ENCODE measurements at regions of chr12 and their contacts with region 1.

Region 1: GRCh38 chr12:12384571-12385340 is 27.9 kb downstream of the BORCS5 start:
- DNase-seq: no peak
- H3K4me3 ChIP-seq: no peak overlapping the region
- H3K27ac ChIP-seq: no peak overlapping the region
- H3K4me1 ChIP-seq: no peaks in the 10 kb centered on the region
- H3K27me3 ChIP-seq: no peaks in the 10 kb centered on the region
- CTCF ChIP-seq: no peak
- POLR2A ChIP-seq: no peak

Region 2: GRCh38 chr12:12138203-12139154 is 246.3 kb before region 1 on chr12:
- intact Hi-C with region 1: no loop called
- DNase-seq: no peak
- H3K4me3 ChIP-seq: no peak overlapping the region
- H3K27ac ChIP-seq: no peak overlapping the region
- H3K4me1 ChIP-seq: no peaks in the 10 kb centered on the region
- H3K27me3 ChIP-seq: no peaks in the 10 kb centered on the region
- CTCF ChIP-seq: no peak
- POLR2A ChIP-seq: no peak

Region 3: GRCh38 chr12:12442548-12443071 is 57.9 kb after region 1 on chr12:
- intact Hi-C with region 1: no loop called
- DNase-seq: no peak
- H3K4me3 ChIP-seq: no peak overlapping the region
- H3K27ac ChIP-seq: peak overlapping the region; percentile 23 to 73
- H3K4me1 ChIP-seq: peaks cover 16% of the 10 kb centered on the region
- H3K27me3 ChIP-seq: no peaks in the 10 kb centered on the region
- CTCF ChIP-seq: no peak
- POLR2A ChIP-seq: no peak

Region 4: DNA sequence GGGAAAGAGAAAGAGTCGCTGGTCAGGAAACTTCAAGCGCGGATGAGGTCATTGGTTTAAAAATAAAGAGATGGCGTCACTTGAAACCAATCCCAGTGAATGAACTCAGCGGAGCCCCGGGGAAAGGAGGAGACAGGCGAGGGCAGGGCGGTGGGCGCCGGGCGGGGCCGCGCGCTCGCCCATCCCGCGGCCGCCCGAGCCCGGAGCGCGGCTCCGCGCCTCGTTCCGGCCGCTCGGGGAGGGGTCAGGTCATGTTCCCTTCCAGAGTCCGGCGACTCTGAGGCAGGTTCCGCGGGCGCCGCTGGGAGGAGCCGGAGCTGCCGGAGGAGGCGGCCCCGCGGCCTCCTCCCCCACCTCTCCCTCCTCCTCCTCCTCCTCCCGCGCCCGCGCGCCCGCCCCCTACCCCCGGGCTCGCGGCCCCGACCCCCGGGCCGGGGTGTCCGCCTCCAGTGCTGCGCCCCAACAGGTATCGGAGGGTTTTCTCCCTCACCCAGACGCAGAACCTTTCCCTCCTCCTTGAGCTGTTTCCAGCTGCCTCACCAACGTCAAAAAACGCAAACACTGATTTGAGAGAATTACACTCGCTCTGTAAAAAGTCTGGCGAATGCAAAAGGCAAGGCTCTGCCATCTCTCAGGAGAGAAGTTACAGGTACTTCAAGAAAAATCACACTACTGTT is 178.0 kb after region 1 on chr12 and contains the start of gene DUSP16:
- intact Hi-C with region 1: loop called (anchors 10 kb)
- DNase-seq: peak; percentile 94
- H3K4me3 ChIP-seq: peak within 1 kb of the TSS; percentile 91 to 96
- H3K27ac ChIP-seq: peak within 1 kb of the TSS; percentile 100
- H3K4me1 ChIP-seq: peaks cover 18% of the 10 kb centered on the region
- H3K27me3 ChIP-seq: no peaks in the 10 kb centered on the region
- CTCF ChIP-seq: peak in 1 of 3 experiments; percentile 40
- POLR2A ChIP-seq: no peak
- total RNA-seq, gene DUSP16: 42.1 to 48.6 TPM

Measured in testis (tissue), 5 donors.